ENCODE measurements at regions of chr11 and their contacts with region 1.

Region 1: GRCh38 chr11:125494974-125495725 is 915 bp downstream of the FEZ1 start:
- DNase-seq: peak; percentile 74
- H3K4me3 ChIP-seq: peak overlapping the region; percentile 82 to 93 (median 86)
- H3K27ac ChIP-seq: peak overlapping the region; percentile 71
- H3K4me1 ChIP-seq: peaks cover 19% of the 10 kb centered on the region
- H3K27me3 ChIP-seq: no peaks in the 10 kb centered on the region
- CTCF ChIP-seq: no peak

Region 2: GRCh38 chr11:125192183-125192582 is 303.0 kb before region 1 on chr11:
- CTCF ChIA-PET with region 1: no interaction called
- dilution Hi-C with region 1: no loop called
- in situ Hi-C with region 1: no loop called
- intact Hi-C with region 1: no loop called
- DNase-seq: no peak
- H3K4me3 ChIP-seq: no peak overlapping the region
- H3K27ac ChIP-seq: no peak overlapping the region
- H3K4me1 ChIP-seq: peaks cover 6% of the 10 kb centered on the region
- H3K27me3 ChIP-seq: no peaks in the 10 kb centered on the region
- CTCF ChIP-seq: no peak

Region 3: DNA sequence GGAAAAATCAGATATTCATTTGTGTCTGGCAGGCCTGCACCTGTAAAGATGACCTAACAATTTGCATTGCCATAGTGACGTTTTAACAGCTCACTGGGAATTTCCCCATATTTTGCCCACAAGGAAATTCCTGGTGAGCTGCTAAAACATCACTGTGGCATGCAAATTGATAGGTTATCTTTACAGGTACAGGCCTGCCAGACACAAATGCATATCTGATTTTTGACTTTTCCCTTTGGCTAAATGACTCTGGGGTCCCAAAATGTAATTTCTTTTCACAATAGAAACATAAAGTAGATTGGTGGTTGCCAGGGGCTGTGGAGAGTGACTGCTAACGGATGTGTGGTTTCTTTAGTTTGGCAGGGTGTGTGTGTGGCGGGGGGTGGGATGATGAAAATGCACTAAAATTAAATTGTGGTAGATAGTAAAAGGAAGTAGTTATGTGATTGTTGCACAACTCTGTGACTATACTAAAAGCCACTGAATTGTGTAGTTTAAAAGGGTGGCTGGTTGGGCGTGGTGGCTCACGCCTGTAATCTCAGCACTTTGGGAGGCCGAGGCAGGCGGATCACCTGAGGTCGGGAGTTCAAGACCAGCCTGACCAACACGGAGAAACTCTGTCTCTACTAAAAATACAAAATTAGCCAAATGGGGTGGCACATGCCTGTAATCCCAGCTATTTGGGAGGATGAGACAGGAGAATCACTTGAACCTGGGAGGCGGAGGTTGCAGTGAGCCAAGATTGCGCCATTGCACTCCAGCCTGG is 19.4 kb after region 1 on chr11:
- CTCF ChIA-PET with region 1: no interaction called
- dilution Hi-C with region 1: no loop called
- in situ Hi-C with region 1: no loop called
- intact Hi-C with region 1: loop called (anchors 1 kb)
- DNase-seq: peak; percentile 98
- H3K4me3 ChIP-seq: no peak overlapping the region
- H3K27ac ChIP-seq: peak overlapping the region; percentile 88
- H3K4me1 ChIP-seq: peaks cover 15% of the 10 kb centered on the region
- H3K27me3 ChIP-seq: no peaks in the 10 kb centered on the region
- CTCF ChIP-seq: no peak

Region 4: GRCh38 chr11:125568970-125569914 is 74.1 kb after region 1 on chr11 and contains the start of gene EI24:
- CTCF ChIA-PET with region 1: no interaction called
- dilution Hi-C with region 1: no loop called
- in situ Hi-C with region 1: no loop called
- intact Hi-C with region 1: loop called (anchors 1 kb)
- DNase-seq: peak; percentile 90
- H3K4me3 ChIP-seq: peak within 1 kb of the TSS; percentile 57 to 82 (median 77)
- H3K27ac ChIP-seq: peak within 1 kb of the TSS; percentile 78
- H3K4me1 ChIP-seq: peaks cover 9% of the 10 kb centered on the region
- H3K27me3 ChIP-seq: no peaks in the 10 kb centered on the region
- CTCF ChIP-seq: peak; percentile 40 to 78
- total RNA-seq, gene EI24: 127 to 162 TPM

Measured in mammary epithelial cell (primary cell).